ENCODE measurements at regions of chr1 and their contacts with region 1.

Region 1: DNA sequence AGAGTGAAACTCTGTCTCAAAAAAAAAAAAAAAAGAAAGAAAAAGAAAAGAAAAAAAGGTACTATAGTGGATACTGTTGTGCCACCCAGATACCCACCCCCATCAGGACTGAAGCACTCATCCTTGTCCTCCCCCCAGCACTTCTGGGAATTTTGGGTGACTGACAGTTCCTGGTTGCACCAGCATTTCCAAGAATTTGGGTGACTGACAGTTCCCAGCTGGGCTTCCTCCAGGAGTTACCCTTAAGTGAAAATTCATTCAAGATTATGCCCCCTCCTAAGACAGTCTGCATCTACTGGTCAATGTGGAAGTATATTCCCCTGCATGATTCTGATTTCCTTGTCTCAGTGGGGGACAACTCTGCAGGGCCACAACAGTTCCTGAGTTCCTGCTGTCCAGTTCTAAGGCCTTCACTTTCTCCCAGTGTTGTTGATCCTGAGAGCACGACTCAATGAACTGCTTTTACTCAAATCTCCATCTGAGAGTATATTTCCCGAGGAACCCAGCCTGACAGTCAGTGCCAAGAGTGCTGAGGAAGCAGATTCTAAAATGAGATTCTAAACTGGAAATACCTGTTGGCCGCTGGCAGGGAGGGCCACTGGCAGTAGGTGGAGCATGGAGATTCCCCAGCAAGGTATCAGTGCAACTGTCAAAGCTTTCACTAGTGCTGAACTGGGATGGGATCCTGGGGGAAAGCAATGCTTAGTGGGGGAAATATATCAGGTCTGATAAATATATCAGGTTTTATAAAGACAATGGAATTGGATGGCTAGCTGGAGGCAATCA is 18.5 kb downstream of the RIIAD1 start:
- DNase-seq: no peak
- H3K4me3 Mint-ChIP-seq: no peak overlapping the region
- H3K27ac Mint-ChIP-seq: no peak overlapping the region
- H3K4me1 Mint-ChIP-seq: peaks cover 8% of the 10 kb centered on the region
- H3K27me3 Mint-ChIP-seq: peaks cover 19% of the 10 kb centered on the region

Region 2: DNA sequence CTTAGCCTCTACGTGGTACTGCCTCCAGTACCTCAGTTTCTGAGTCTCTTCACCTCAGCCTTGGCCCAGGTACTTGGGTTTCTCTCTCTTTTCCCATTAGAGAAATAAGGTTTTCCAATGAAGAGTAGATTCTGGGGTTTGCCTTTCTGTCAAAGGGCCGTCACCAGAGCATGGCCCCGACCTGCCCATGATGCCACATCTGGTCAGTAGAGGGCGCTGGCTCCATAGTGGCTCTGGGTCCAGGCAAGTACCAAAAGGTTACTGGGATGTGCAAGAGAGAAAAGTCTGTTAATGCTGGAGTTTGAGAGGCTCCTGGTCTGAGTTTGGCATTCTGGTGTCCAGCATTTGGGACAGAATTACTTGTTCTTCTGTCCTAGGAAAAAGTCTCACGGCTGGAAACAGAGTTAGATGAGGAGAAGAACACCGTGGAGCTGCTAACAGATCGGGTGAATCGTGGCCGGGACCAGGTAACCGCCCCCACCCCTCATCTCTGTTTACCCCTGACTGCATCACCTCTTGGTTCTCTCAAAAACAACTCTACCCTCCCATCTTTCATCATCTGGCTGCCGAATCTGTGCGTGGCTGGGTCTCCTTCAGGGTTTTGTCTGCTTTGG is 205.0 kb before region 1 on chr1:
- intact Hi-C with region 1: loop called (anchors 1 kb)
- DNase-seq: peak; percentile 94
- H3K4me3 Mint-ChIP-seq: no peak overlapping the region
- H3K27ac Mint-ChIP-seq: no peak overlapping the region
- H3K4me1 Mint-ChIP-seq: peaks cover 4% of the 10 kb centered on the region
- H3K27me3 Mint-ChIP-seq: peaks cover 3% of the 10 kb centered on the region

Region 3: GRCh38 chr1:151594143-151594625 is 145.6 kb before region 1 on chr1:
- intact Hi-C with region 1: loop called (anchors 2 kb)
- DNase-seq: peak; percentile 95
- H3K4me3 Mint-ChIP-seq: peak overlapping the region; percentile 62
- H3K27ac Mint-ChIP-seq: no peak overlapping the region
- H3K4me1 Mint-ChIP-seq: peaks cover 6% of the 10 kb centered on the region
- H3K27me3 Mint-ChIP-seq: peaks cover 25% of the 10 kb centered on the region

Region 4: GRCh38 chr1:151803164-151803563 is 63.4 kb after region 1 on chr1:
- intact Hi-C with region 1: loop called (anchors 5 kb)
- DNase-seq: no peak
- H3K4me3 Mint-ChIP-seq: no peak overlapping the region
- H3K27ac Mint-ChIP-seq: no peak overlapping the region
- H3K4me1 Mint-ChIP-seq: peaks cover 5% of the 10 kb centered on the region
- H3K27me3 Mint-ChIP-seq: peaks cover 22% of the 10 kb centered on the region

Region 5: GRCh38 chr1:151945725-151946364 is 206.1 kb after region 1 on chr1:
- intact Hi-C with region 1: no loop called
- DNase-seq: peak; percentile 94
- H3K4me3 Mint-ChIP-seq: peak overlapping the region; percentile 74
- H3K27ac Mint-ChIP-seq: peak overlapping the region; percentile 94
- H3K4me1 Mint-ChIP-seq: peaks cover 31% of the 10 kb centered on the region
- H3K27me3 Mint-ChIP-seq: no peaks in the 10 kb centered on the region